Activated CD8-positive, alpha-beta T cell treated with anti-CD3 and anti-CD28 coated beads, Interleukin-2, amount 10 ng/mL, durations not matched to agents 7 days and 5 days (primary cell): ENCODE measurements at regions of chr1 and their contacts with region 1.

Region 1: DNA sequence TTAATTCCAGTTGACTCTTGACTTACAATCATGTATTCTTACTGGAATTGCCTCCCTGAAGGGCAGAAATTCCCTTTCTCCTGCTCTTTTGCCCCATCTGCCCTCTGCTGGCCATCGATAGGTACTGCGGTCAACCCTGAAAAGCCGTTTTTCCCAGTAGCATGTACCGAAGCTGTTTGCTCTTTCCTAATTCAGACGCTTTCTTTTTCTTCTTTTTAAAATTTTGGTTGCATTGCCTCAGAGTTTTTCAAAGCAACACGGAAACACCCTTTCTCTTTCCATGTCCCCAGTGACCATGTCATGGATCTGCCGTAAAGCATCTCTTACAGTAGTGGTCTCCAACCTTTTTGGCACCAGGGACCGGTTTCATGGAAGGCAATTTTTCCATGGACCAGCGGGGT is 164.2 kb upstream of the C1orf21 start:
- DNase-seq: peak; percentile 43
- ATAC-seq: no peak
- H3K4me3 Mint-ChIP-seq: no peak overlapping the region
- H3K27ac Mint-ChIP-seq: no peak overlapping the region
- H3K4me1 Mint-ChIP-seq: no peaks in the 10 kb centered on the region
- H3K27me3 Mint-ChIP-seq: no peaks in the 10 kb centered on the region

Region 2: GRCh38 chr1:184075055-184076029 is 147.3 kb before region 1 on chr1:
- CTCF ChIA-PET with region 1: interaction called, 14 read pairs
- POLR2A ChIA-PET with region 1: no interaction called
- DNase-seq: peak; percentile 43
- ATAC-seq: no peak
- H3K4me3 Mint-ChIP-seq: no peak overlapping the region
- H3K27ac Mint-ChIP-seq: no peak overlapping the region
- H3K4me1 Mint-ChIP-seq: peaks cover 3% of the 10 kb centered on the region
- H3K27me3 Mint-ChIP-seq: no peaks in the 10 kb centered on the region